CD14-positive monocyte (primary cell): ENCODE measurements at regions of chr13 and their contacts with region 1.

Region 1: DNA sequence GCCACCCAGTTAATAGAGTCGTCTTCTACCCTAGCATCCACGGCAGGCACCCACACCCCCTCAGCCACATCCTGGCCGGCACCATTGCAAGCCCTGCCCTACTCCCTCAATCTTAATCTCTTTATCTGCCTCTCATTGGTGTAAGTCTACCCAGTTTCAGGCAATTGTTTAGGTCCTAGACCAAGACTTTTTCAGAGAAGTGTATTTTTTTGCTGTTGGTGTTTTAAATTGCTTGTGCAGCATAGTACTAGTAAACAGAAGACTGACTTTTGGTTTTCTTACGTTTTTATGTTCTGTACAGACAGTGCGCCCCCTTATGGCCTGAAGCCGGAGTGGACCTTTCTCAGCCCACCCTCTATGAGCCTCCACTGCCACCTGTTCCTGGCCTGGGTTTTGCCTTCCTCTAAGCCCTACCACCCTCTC is 2.3 kb upstream of the LCP1 start:
- DNase-seq: peak; percentile 61 to 73 (median 68)
- H3K4me3 ChIP-seq: peak overlapping the region; percentile 20 to 98 (median 39)
- H3K4me3 Mint-ChIP-seq: peak overlapping the region; percentile 51 to 67
- H3K27ac ChIP-seq: peak overlapping the region; percentile 53 to 95
- H3K27ac Mint-ChIP-seq: peak overlapping the region; percentile 46 to 98 (median 83)
- H3K4me1 ChIP-seq: peaks cover 33 to 38% of the 10 kb centered on the region in 2 donors
- H3K4me1 Mint-ChIP-seq: peaks cover 47% of the 10 kb centered on the region
- H3K27me3 ChIP-seq: no peaks in the 10 kb centered on the region
- H3K27me3 Mint-ChIP-seq: peaks cover 0 to 5% (median 0%) of the 10 kb centered on the region in 3 donors
- CTCF ChIP-seq: peak; percentile 79

Region 2: GRCh38 chr13:46321494-46322225 is 137.4 kb after region 1 on chr13:
- intact Hi-C with region 1: loop called in 1 of 2 experiments (anchors 10 kb)
- DNase-seq: peak; percentile 74 to 87 (median 86)
- H3K4me3 ChIP-seq: peak overlapping the region in 2 of 3 experiments; percentile 15 to 26
- H3K4me3 Mint-ChIP-seq: peak overlapping the region in 1 of 2 donors; percentile 51
- H3K27ac ChIP-seq: peak overlapping the region in 1 of 2 donors; percentile 77
- H3K27ac Mint-ChIP-seq: peak overlapping the region; percentile 87 to 97 (median 95)
- H3K4me1 ChIP-seq: peaks cover 32 to 45% of the 10 kb centered on the region in 2 donors
- H3K4me1 Mint-ChIP-seq: peaks cover 59% of the 10 kb centered on the region
- H3K27me3 ChIP-seq: no peaks in the 10 kb centered on the region
- H3K27me3 Mint-ChIP-seq: peaks cover 0 to 3% (median 0%) of the 10 kb centered on the region in 3 donors
- CTCF ChIP-seq: peak; percentile 88

Region 3: GRCh38 chr13:46614582-46614981 is 430.3 kb after region 1 on chr13:
- intact Hi-C with region 1: no loop called
- DNase-seq: peak in 2 of 3 donors; percentile 9 to 38
- H3K4me3 ChIP-seq: no peak overlapping the region
- H3K4me3 Mint-ChIP-seq: no peak overlapping the region
- H3K27ac ChIP-seq: no peak overlapping the region
- H3K27ac Mint-ChIP-seq: no peak overlapping the region
- H3K4me1 ChIP-seq: peaks cover 5 to 12% of the 10 kb centered on the region in 2 donors
- H3K4me1 Mint-ChIP-seq: peaks cover 39% of the 10 kb centered on the region
- H3K27me3 ChIP-seq: no peaks in the 10 kb centered on the region
- H3K27me3 Mint-ChIP-seq: peaks cover 0 to 3% (median 0%) of the 10 kb centered on the region in 3 donors
- CTCF ChIP-seq: peak; percentile 17